ENCODE measurements at regions of chr11 and their contacts with region 1.

Region 1: GRCh38 chr11:126310228-126310991 is 6.5 kb downstream of the DCPS start:
- DNase-seq: no peak
- H3K4me3 ChIP-seq: no peak overlapping the region
- CTCF ChIP-seq: peak; percentile 78

Region 2: GRCh38 chr11:126172596-126173038 is 137.8 kb before region 1 on chr11:
- CTCF ChIA-PET with region 1: no interaction called
- POLR2A ChIA-PET with region 1: no interaction called
- DNase-seq: peak; percentile 47
- H3K4me3 ChIP-seq: no peak overlapping the region
- CTCF ChIP-seq: no peak

Region 3: GRCh38 chr11:126355324-126355925 is 45.0 kb after region 1 on chr11 and contains the start of gene ST3GAL4:
- CTCF ChIA-PET with region 1: interaction called, 47 read pairs
- POLR2A ChIA-PET with region 1: interaction called, 3 read pairs
- DNase-seq: no peak
- H3K4me3 ChIP-seq: peak within 1 kb of the TSS; percentile 86
- CTCF ChIP-seq: no peak

Region 4: GRCh38 chr11:126416542-126417090 is 106.2 kb after region 1 on chr11:
- CTCF ChIA-PET with region 1: interaction called, 67 read pairs
- POLR2A ChIA-PET with region 1: no interaction called
- DNase-seq: no peak
- H3K4me3 ChIP-seq: peak overlapping the region; percentile 55
- CTCF ChIP-seq: no peak

Region 5: DNA sequence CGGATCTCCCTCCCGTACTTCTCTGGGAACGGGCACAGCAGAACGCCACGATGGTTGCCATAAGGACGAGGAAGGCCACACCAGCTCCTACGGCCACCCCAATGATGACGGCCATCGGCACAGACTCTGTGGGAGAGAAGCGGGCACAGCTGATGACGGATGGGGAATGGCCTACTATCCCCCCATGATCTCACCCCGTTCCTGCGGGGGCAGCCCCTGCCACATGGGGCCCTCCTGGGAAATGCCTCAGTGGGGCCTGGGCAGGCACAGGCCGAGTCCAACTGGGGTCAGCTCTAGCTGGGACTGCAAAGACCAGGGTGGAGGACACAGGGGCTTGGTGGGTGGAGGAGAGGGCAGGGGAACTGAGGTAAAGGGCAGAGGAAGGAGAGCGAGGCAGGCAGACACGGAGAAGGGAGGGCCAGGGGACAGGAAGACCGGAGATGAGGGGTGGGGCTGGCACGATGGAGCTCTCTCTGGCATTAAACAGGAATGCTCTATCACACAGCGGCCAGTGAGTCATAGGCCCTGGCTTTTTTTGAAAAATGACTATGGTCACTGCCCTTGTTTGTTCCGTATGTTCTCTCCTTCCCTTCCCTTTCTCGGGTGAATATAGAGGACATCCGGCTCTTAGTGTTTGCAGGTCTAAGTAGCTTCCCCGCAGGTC is 121.1 kb after region 1 on chr11:
- CTCF ChIA-PET with region 1: interaction called, 71 read pairs
- POLR2A ChIA-PET with region 1: no interaction called
- DNase-seq: peak; percentile 21
- H3K4me3 ChIP-seq: no peak overlapping the region
- CTCF ChIP-seq: no peak

Region 6: GRCh38 chr11:127037001-127037400 is 726.6 kb after region 1 on chr11:
- CTCF ChIA-PET with region 1: no interaction called
- POLR2A ChIA-PET with region 1: no interaction called
- DNase-seq: no peak
- H3K4me3 ChIP-seq: no peak overlapping the region
- CTCF ChIP-seq: no peak

Measured in AG04449 (cell line).